ENCODE measurements at regions of chr14 and their contacts with region 1.

Region 1: DNA sequence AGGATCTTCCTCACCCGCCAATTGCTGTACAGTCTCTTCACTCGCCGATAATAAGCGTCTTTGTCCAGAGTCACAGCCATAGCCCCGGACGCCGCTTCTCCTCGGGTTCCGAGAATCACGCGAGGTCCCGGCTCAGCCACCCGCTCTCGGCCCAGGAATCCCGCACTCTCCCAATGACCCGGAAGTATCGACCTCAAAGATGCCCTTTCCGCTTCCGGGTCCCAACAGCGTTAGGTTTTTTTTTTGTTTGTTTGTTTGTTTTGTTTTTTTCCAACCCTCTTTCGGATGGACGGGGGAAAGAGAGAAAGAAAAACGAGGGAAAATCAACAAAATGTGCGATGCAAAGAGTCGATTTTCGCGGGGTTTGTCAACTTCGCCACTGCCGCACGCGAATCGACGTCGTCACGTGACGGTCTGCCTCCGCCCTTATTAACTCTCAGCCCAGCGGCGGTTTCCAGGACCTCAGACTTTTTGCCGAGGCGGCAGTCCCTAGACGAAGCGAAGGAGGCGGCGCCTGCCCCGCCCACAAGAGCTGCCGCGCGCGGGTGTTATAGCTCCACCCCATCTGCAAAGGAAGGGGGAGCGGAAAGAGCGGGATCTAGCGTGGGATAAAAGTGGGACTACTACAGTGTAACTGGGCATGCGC is at the start of gene SUPT16H:
- DNase-seq: peak; percentile 87
- ATAC-seq: peak; percentile 91
- H3K4me3 Mint-ChIP-seq: peak within 1 kb of the TSS; percentile 96
- H3K27ac Mint-ChIP-seq: peak within 1 kb of the TSS; percentile 99
- H3K4me1 Mint-ChIP-seq: peaks cover 40% of the 10 kb centered on the region
- H3K27me3 Mint-ChIP-seq: no peaks in the 10 kb centered on the region
- CTCF ChIP-seq: no peak
- total RNA-seq, gene SUPT16H: 100 and 102 TPM in 2 replicates

Region 2: GRCh38 chr14:21263656-21264411 is 120.1 kb before region 1 on chr14:
- CTCF ChIA-PET with region 1: no interaction called
- POLR2A ChIA-PET with region 1: interaction called, 14 read pairs
- intact Hi-C with region 1: loop called (anchors 1 kb)
- DNase-seq: no peak
- ATAC-seq: peak; percentile 68
- H3K4me3 Mint-ChIP-seq: peak overlapping the region; percentile 100
- H3K27ac Mint-ChIP-seq: peak overlapping the region; percentile 87
- H3K4me1 Mint-ChIP-seq: peaks cover 78% of the 10 kb centered on the region
- H3K27me3 Mint-ChIP-seq: no peaks in the 10 kb centered on the region
- CTCF ChIP-seq: no peak

Region 3: DNA sequence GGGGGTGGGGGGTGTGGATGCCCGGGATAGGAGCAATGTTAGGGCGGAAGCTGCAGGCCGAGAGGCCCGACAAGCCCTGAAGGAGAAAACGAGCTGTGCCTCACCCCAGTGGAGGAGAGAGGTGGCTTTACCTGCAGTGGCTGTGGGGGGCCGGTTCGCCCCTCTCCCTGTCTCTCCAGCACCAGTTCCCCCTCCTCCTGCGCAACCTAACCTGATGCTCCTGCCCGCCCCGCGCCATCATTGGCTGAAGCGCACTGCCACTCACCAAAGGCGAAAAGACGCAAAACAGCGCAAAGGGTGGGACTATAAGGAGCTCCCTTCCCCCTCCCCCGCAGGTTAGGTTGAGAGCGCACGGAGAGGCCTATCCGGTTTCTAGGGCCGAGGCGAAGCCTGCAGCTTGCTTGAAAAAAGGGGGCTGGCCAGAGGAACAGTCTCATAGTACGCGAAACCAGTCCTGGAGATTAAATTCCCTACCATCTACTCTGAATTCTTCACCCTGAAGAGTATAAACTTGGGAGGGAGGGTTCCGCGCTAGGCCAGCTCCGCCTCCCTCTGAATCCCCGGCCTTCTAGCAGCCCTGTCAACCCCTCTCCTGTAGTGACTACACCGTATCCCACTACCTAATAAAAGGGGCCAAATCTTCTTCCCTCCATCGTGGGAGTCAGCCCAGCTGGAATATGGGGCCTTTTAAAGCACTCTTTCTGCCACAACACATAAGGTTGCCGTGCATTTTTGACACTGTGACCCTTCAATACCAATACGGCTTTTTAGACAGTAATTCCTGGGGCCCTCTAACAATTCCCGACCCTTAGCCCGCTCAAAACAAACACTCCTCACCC is 53.3 kb after region 1 on chr14:
- CTCF ChIA-PET with region 1: no interaction called
- POLR2A ChIA-PET with region 1: interaction called, 15 read pairs
- intact Hi-C with region 1: loop called (anchors 1 kb)
- DNase-seq: peak; percentile 96
- ATAC-seq: peak; percentile 99
- H3K4me3 Mint-ChIP-seq: peak overlapping the region; percentile 84
- H3K27ac Mint-ChIP-seq: peak overlapping the region; percentile 87
- H3K4me1 Mint-ChIP-seq: peaks cover 56% of the 10 kb centered on the region
- H3K27me3 Mint-ChIP-seq: no peaks in the 10 kb centered on the region
- CTCF ChIP-seq: no peak

Region 4: DNA sequence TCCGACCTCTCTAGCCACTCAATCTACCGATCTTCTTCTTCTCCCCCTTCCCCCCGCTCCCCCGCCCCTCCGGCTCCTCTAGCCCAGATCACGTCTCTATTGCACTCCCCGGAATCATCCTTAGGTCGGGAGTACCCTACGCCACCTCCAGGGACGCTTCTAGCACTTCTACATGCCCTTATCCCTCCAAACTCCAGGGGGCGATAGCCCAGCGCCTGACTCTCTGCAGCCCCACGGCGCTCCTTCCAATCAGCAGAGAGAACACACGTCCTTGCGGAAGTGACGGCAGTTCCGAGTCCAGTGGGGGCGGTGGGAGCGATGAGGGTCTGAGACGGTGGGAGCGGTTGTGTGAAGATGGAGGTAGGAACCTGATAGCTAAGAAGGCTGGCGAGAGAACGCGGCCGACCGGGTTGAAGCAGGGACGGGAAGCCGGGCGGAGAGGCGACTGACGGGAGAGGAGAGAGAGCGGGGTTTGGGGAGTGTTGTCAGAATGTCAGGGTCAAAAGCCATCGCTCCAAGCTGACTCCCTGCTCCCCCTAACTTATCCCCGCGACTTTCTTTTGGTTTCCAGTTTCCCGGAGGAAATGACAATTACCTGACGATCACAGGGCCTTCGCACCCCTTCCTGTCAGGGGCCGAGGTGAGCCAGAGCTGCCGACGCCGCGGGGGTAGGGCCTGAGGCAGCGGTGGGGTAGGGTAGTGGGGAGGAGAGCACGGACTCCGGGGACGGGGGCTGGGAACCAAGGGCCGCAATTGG is 93.1 kb after region 1 on chr14 and contains the starts of genes RAB2B and TOX4:
- CTCF ChIA-PET with region 1: no interaction called
- POLR2A ChIA-PET with region 1: interaction called, 8 read pairs
- intact Hi-C with region 1: loop called (anchors 1 kb)
- DNase-seq: peak; percentile 84
- ATAC-seq: peak; percentile 96
- H3K4me3 Mint-ChIP-seq: peak within 1 kb of the TSS; percentile 99
- H3K27ac Mint-ChIP-seq: peak within 1 kb of the TSS; percentile 95
- H3K4me1 Mint-ChIP-seq: peaks cover 37% of the 10 kb centered on the region
- H3K27me3 Mint-ChIP-seq: no peaks in the 10 kb centered on the region
- CTCF ChIP-seq: no peak
- total RNA-seq, gene RAB2B: 25.0 and 27.5 TPM in 2 replicates
- total RNA-seq, gene TOX4: 77.2 and 81.4 TPM in 2 replicates

Region 5: GRCh38 chr14:21626491-21627230 is 242.7 kb after region 1 on chr14:
- CTCF ChIA-PET with region 1: no interaction called
- POLR2A ChIA-PET with region 1: no interaction called
- intact Hi-C with region 1: no loop called
- DNase-seq: no peak
- ATAC-seq: no peak
- H3K4me3 Mint-ChIP-seq: no peak overlapping the region
- H3K27ac Mint-ChIP-seq: no peak overlapping the region
- H3K4me1 Mint-ChIP-seq: no peaks in the 10 kb centered on the region
- H3K27me3 Mint-ChIP-seq: peaks cover 12% of the 10 kb centered on the region
- CTCF ChIP-seq: no peak

Region 6: GRCh38 chr14:22478670-22479069 is 1094.7 kb after region 1 on chr14:
- CTCF ChIA-PET with region 1: no interaction called
- POLR2A ChIA-PET with region 1: no interaction called
- intact Hi-C with region 1: no loop called
- DNase-seq: no peak
- ATAC-seq: no peak
- H3K4me3 Mint-ChIP-seq: peak overlapping the region; percentile 42
- H3K27ac Mint-ChIP-seq: peak overlapping the region; percentile 85
- H3K4me1 Mint-ChIP-seq: peaks cover 98% of the 10 kb centered on the region
- H3K27me3 Mint-ChIP-seq: no peaks in the 10 kb centered on the region
- CTCF ChIP-seq: no peak

Measured in activated B cell treated with CpG ODN at 0.5 μM for 24 hours (primary cell).